Activated CD4-positive, alpha-beta memory T cell treated with anti-CD3 and anti-CD28 coated beads for 36 hours (primary cell): ENCODE measurements at regions of chr3 and their contacts with region 1.

Region 1: GRCh38 chr3:30199096-30199759 is 407.2 kb upstream of the TGFBR2 start:
- DNase-seq: peak; percentile 74
- H3K4me3 Mint-ChIP-seq: no peak overlapping the region
- H3K27ac Mint-ChIP-seq: no peak overlapping the region
- H3K4me1 Mint-ChIP-seq: no peaks in the 10 kb centered on the region
- H3K27me3 Mint-ChIP-seq: peaks cover 2% of the 10 kb centered on the region

Region 2: GRCh38 chr3:30012941-30013543 is 186.2 kb before region 1 on chr3:
- CTCF ChIA-PET with region 1: interaction called, 77 read pairs
- POLR2A ChIA-PET with region 1: no interaction called
- intact Hi-C with region 1: loop called (anchors 1 kb)
- DNase-seq: peak; percentile 48
- H3K4me3 Mint-ChIP-seq: no peak overlapping the region
- H3K27ac Mint-ChIP-seq: no peak overlapping the region
- H3K4me1 Mint-ChIP-seq: no peaks in the 10 kb centered on the region
- H3K27me3 Mint-ChIP-seq: peaks cover 11% of the 10 kb centered on the region

Region 3: GRCh38 chr3:30112902-30113484 is 86.2 kb before region 1 on chr3:
- CTCF ChIA-PET with region 1: interaction called, 37 read pairs
- POLR2A ChIA-PET with region 1: no interaction called
- intact Hi-C with region 1: loop called (anchors 1 kb)
- DNase-seq: no peak
- H3K4me3 Mint-ChIP-seq: no peak overlapping the region
- H3K27ac Mint-ChIP-seq: no peak overlapping the region
- H3K4me1 Mint-ChIP-seq: peaks cover 3% of the 10 kb centered on the region
- H3K27me3 Mint-ChIP-seq: no peaks in the 10 kb centered on the region

Region 4: DNA sequence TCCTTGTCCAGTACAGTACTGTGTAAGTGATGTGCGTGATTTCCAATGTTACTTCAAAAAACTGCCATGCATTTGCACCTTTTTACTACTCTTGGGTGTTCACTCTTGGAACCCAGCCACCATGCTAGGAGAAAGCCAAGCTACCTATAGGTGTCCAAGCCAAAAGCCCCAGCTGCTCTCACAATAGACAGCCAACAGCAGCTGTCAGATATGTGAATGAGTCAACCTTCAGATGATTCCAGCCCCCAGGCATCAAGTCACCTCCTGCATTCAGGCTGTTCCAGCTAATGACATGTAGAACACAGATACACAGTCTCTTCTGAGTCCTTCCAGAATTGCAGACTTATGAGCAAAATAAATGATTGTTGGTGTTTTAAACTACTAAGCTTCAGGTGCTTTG is 10.5 kb before region 1 on chr3:
- CTCF ChIA-PET with region 1: interaction called, 14 read pairs
- POLR2A ChIA-PET with region 1: no interaction called
- intact Hi-C with region 1: no loop called
- DNase-seq: no peak
- H3K4me3 Mint-ChIP-seq: no peak overlapping the region
- H3K27ac Mint-ChIP-seq: no peak overlapping the region
- H3K4me1 Mint-ChIP-seq: no peaks in the 10 kb centered on the region
- H3K27me3 Mint-ChIP-seq: peaks cover 7% of the 10 kb centered on the region

Region 5: GRCh38 chr3:30751610-30752299 is 552.5 kb after region 1 on chr3:
- CTCF ChIA-PET with region 1: interaction called, 5 read pairs
- POLR2A ChIA-PET with region 1: no interaction called
- intact Hi-C with region 1: loop called (anchors 1 kb)
- DNase-seq: peak; percentile 76
- H3K4me3 Mint-ChIP-seq: no peak overlapping the region
- H3K27ac Mint-ChIP-seq: no peak overlapping the region
- H3K4me1 Mint-ChIP-seq: peaks cover 23% of the 10 kb centered on the region
- H3K27me3 Mint-ChIP-seq: peaks cover 2% of the 10 kb centered on the region